ENCODE measurements at regions of chr3 and their contacts with region 1.

Region 1: GRCh38 chr3:76585794-76586392 is 454.0 kb upstream of the ROBO2 start:
- DNase-seq: no peak
- H3K4me3 ChIP-seq: no peak overlapping the region
- H3K27ac ChIP-seq: no peak overlapping the region
- H3K4me1 ChIP-seq: no peaks in the 10 kb centered on the region
- H3K27me3 ChIP-seq: no peaks in the 10 kb centered on the region
- CTCF ChIP-seq: peak in 2 of 3 experiments; percentile 12 to 55; a peak in 2 of 4 replicates
- EP300 ChIP-seq: no peak
- POLR2A ChIP-seq: no peak
- RAD21 ChIP-seq: peak in 1 of 2 experiments; percentile 42; a peak in 3 of 4 replicates

Region 2: DNA sequence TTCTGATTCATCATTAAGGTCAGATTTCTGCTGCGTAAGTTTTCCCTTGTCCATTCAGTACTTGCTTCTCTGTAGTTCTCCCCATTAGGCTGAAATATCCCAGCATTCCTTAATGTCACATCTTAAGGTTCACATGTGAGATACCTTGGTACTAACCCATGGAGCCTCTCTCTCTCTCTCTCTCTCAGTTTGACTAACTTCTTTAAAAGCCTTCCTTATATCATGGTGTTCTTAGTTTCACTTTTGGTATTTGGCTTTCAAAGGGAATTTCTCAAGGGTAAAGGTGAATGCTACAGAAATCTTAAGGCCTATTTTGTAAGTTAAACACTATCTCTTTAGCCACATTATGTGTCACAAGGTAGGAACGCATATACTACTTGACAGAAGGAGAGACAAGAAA is 373.2 kb before region 1 on chr3:
- CTCF ChIA-PET with region 1: no interaction called
- POLR2A ChIA-PET with region 1: no interaction called
- DNase-seq: no peak
- H3K4me3 ChIP-seq: no peak overlapping the region
- H3K27ac ChIP-seq: no peak overlapping the region
- H3K4me1 ChIP-seq: no peaks in the 10 kb centered on the region
- H3K27me3 ChIP-seq: no peaks in the 10 kb centered on the region
- CTCF ChIP-seq: no peak
- EP300 ChIP-seq: no peak
- POLR2A ChIP-seq: no peak
- RAD21 ChIP-seq: no peak

Region 3: DNA sequence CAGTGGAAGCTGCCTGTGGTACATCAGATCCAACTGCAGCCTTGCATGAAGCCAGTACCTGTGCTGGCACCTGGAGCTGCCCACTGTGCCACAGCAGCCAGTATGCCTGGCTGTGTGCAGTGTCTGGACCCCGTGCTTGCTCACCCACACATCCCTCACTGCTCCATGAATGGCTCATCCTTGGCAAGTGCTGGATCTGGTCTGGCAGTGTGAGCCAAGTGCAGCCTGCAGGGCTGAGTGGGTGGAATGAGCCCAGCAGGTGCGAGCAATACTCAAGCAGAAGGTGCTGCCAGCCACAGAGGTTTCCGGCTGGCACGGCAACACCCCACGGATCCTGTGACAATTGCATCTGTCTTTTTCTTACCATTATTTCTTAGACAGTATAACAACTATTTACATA is 34.2 kb before region 1 on chr3:
- CTCF ChIA-PET with region 1: interaction called, 10 read pairs
- POLR2A ChIA-PET with region 1: no interaction called
- DNase-seq: no peak
- H3K4me3 ChIP-seq: no peak overlapping the region
- H3K27ac ChIP-seq: no peak overlapping the region
- H3K4me1 ChIP-seq: no peaks in the 10 kb centered on the region
- H3K27me3 ChIP-seq: no peaks in the 10 kb centered on the region
- CTCF ChIP-seq: no peak
- EP300 ChIP-seq: no peak
- POLR2A ChIP-seq: no peak
- RAD21 ChIP-seq: no peak

Measured in H1 (cell line).